AG04450 (cell line): ENCODE measurements at regions of chr2 and their contacts with region 1.

Region 1: DNA sequence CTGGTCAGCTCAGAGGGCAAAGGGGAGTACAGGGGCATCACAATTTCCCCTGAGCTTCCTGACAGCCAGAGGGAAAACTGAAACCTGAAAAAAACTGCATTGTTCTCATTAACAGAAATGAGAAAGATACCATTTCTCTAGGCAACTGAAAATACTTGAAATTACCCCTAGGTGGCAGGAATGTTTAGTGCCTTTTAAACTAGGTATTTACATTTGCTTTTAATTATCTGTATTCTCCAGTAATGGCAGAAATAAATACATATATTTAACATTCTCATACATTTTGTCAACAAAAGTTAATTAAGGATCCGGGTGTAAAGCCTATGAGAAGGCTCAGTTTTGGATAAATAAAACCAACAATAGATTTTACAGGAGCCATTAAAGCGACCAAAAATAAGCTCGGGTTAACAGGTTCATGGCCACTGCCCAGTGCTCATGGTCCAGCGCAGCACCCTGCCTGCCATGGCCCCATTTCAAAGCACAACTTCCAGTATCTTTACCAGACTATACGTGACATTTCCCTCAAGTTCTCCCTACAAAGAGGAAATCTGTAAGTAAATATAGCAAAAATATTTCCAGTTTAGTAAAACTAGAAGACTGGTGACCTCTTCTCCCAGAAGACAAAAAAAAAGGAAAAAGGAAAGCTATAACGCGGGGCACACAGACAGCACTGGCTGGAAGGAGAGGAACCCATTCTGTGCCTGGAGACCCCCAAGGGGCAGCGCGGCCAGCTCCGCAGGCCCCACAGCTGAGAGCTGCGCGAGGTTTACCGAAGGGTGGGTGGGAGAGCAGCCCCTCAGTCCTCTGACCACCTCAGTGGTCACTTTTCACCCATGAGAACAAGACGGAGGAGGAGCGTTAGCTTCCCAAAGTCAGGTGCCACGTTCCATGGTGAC is 34.7 kb downstream of the RPL31 start:
- DNase-seq: no peak
- H3K4me3 ChIP-seq: no peak overlapping the region
- H3K27ac ChIP-seq: no peak overlapping the region
- H3K27me3 ChIP-seq: no peaks in the 10 kb centered on the region
- CTCF ChIP-seq: peak; percentile 68

Region 2: GRCh38 chr2:100397118-100397770 is 639.6 kb before region 1 on chr2:
- CTCF ChIA-PET with region 1: no interaction called
- POLR2A ChIA-PET with region 1: no interaction called
- DNase-seq: no peak
- H3K4me3 ChIP-seq: no peak overlapping the region
- H3K27ac ChIP-seq: no peak overlapping the region
- H3K27me3 ChIP-seq: no peaks in the 10 kb centered on the region
- CTCF ChIP-seq: no peak

Region 3: DNA sequence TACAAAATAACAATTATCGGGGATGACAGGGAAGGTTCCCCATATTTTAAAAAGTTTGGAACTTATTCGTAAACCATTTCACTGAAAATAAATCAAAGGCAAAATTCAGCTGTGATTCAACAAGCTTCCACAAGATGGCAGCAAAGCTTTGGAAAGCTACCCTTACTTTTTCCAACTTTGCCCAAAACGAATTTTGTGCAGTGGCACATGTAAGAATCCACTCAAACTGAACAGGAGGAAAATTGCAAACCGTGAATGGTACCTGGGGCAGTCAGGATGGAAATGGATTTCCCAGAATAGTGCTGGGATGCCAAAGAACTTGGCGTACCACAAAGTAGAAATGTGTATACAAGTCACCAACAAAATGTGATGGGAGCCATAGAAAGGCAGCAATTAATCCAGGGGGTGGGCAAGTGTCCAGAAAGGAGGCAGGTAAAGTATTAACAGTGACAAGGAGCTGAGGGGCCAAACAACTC is 24.1 kb before region 1 on chr2:
- CTCF ChIA-PET with region 1: interaction called, 12 read pairs
- POLR2A ChIA-PET with region 1: no interaction called
- DNase-seq: no peak
- H3K4me3 ChIP-seq: no peak overlapping the region
- H3K27ac ChIP-seq: no peak overlapping the region
- H3K27me3 ChIP-seq: no peaks in the 10 kb centered on the region
- CTCF ChIP-seq: peak; percentile 83

Region 4: GRCh38 chr2:101047075-101047766 is 10.4 kb after region 1 on chr2:
- CTCF ChIA-PET with region 1: interaction called, 22 read pairs
- POLR2A ChIA-PET with region 1: no interaction called
- DNase-seq: no peak
- H3K4me3 ChIP-seq: no peak overlapping the region
- H3K27ac ChIP-seq: no peak overlapping the region
- H3K27me3 ChIP-seq: peaks cover 10% of the 10 kb centered on the region
- CTCF ChIP-seq: no peak

Region 5: DNA sequence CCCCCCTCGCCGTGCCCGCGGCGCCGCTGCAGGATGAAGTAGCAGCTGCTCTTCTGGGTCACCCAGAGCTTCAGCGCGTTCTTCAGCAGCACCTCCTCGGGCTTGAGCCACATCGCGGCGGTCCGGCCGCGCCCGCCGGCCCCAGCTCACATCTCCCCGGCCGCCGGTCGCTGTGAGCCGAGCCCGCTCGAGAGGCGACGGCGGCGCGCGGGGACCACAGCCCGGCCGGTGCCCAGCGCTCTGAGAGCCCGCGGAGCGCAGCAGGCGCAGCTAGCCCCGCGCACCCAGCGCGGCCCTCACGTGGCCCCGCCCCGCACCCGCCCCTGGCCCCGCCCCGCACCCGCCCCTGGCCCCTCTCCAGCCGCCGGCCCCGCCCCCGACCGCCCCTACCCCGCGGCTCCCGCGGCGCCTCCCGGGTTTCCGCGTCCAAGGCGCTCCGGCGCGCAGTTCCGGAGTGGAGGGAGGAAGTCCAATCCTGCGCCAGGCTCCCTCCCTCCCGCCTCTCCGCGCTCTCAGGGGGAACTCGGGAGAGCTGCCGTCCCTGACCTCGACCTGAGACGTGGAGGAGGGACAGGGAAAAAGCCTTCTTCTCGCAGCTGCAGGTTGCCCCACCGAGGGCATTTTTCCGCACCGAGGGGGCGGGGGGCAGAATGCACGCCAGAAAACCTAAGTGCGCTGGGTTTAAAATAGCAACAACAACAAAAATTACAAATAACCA is 114.5 kb after region 1 on chr2 and contains the start of gene TBC1D8:
- CTCF ChIA-PET with region 1: interaction called, 39 read pairs
- POLR2A ChIA-PET with region 1: no interaction called
- DNase-seq: peak; percentile 26
- H3K4me3 ChIP-seq: peak within 1 kb of the TSS; percentile 71
- H3K27ac ChIP-seq: peak within 1 kb of the TSS; percentile 11
- H3K27me3 ChIP-seq: peaks cover 26% of the 10 kb centered on the region
- CTCF ChIP-seq: no peak
- polyA plus RNA-seq, gene TBC1D8: 2.3 and 2.5 TPM in 2 replicates

Region 6: DNA sequence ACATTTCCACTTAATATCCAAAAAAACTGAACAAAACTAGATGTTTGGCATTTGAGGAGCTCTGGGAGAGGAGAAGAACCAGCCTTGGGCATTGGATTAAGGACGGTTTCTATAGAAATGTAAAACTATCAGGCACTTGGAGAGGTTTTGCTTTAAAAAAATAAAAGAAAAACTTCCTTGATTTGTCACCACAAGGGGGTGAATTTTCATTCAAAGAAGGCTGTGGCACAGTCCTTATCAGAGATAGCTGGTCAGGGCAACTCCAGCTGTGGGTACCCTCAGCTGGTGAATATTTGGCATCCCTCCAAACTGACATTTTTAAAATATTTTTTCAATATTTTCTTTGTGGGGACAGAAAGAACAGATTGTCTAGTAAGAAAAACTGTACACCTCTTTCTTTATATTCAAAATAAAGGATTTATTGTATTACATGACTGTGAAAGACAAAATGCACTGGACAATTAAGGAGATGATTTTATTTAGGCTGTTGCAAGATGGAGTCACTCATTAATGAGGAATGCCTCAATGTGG is 160.5 kb after region 1 on chr2:
- CTCF ChIA-PET with region 1: interaction called, 171 read pairs
- POLR2A ChIA-PET with region 1: no interaction called
- DNase-seq: no peak
- H3K4me3 ChIP-seq: no peak overlapping the region
- H3K27ac ChIP-seq: no peak overlapping the region
- H3K27me3 ChIP-seq: peaks cover 12% of the 10 kb centered on the region
- CTCF ChIP-seq: no peak